ENCODE measurements at regions of chr15 and their contacts with region 1.

Region 1: DNA sequence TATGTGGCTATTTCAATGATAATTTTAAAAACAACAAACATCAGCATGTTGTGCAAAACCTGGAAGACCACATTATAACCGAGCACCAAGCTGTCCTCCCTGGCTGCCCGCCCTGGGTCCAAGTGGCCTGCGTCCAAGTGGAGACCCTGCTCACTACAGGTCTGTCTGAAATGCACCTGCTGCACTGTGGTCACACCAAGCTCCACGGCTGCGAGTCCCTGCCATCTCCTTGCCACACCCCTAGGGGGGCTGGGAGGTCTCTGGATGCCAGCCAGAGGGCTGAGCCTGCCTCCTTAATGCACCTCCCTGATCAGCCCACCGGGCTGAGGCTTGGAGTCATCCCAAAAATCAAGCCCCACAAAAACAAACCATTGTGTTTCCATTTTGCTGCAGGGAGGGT is 187.1 kb downstream of the MEGF11 start:
- DNase-seq: no peak
- H3K4me3 ChIP-seq: no peak overlapping the region
- H3K27ac ChIP-seq: no peak overlapping the region
- H3K4me1 ChIP-seq: no peaks in the 10 kb centered on the region
- H3K27me3 ChIP-seq: no peaks in the 10 kb centered on the region
- CTCF ChIP-seq: no peak
- EP300 ChIP-seq: no peak
- POLR2A ChIP-seq: no peak

Region 2: GRCh38 chr15:64651573-64652260 is 1414.7 kb before region 1 on chr15:
- intact Hi-C with region 1: no loop called
- DNase-seq: no peak
- H3K4me3 ChIP-seq: no peak overlapping the region
- H3K27ac ChIP-seq: no peak overlapping the region
- H3K4me1 ChIP-seq: no peaks in the 10 kb centered on the region
- H3K27me3 ChIP-seq: no peaks in the 10 kb centered on the region
- CTCF ChIP-seq: no peak
- EP300 ChIP-seq: no peak
- POLR2A ChIP-seq: no peak

Region 3: DNA sequence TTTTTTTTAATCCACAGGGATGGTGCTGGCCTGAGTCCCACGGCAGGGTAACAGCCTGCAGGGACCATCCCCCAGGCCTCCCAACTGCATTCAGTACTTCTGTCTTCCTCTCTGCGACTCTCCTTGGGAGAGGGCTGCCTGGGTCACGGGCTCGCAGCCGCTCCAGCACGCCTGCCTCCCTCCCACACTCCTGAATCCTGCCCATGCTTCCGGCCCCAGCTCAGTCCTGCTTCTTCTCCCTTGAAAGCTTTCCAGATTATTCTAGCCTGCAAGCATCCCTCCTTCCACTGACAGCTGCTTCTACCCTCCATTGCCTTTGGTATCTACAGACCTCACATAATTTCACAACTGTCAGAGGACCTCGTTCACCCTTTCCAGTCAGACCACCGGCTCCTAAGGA is 154.7 kb after region 1 on chr15:
- intact Hi-C with region 1: no loop called
- DNase-seq: peak in 2 of 5 donors; percentile 30 to 47
- H3K4me3 ChIP-seq: no peak overlapping the region
- H3K27ac ChIP-seq: no peak overlapping the region
- H3K4me1 ChIP-seq: no peaks in the 10 kb centered on the region
- H3K27me3 ChIP-seq: no peaks in the 10 kb centered on the region
- CTCF ChIP-seq: no peak
- EP300 ChIP-seq: no peak
- POLR2A ChIP-seq: no peak

Region 4: DNA sequence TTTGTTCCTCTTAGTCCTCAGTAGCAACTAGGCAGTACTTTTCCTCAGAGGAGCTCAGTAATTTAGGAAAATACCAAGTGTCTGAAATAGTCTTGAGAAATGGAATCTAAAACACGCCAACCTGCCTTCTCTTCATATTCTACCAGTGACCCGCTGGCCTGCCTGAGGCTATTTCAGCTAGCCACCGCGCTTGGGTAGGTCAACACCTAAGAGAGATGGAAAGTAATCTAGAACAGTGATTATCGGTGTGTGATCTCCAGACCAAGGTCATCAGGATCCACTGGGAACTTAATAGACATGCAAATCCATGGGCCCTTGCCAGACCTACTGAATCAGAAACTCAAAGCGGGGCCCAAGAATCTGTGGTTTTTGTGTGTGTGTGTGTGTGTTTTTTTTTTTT is 491.9 kb after region 1 on chr15:
- intact Hi-C with region 1: loop called in 1 of 4 experiments (anchors 5 kb)
- DNase-seq: no peak
- H3K4me3 ChIP-seq: no peak overlapping the region
- H3K27ac ChIP-seq: no peak overlapping the region
- H3K4me1 ChIP-seq: no peaks in the 10 kb centered on the region
- H3K27me3 ChIP-seq: no peaks in the 10 kb centered on the region
- CTCF ChIP-seq: no peak
- EP300 ChIP-seq: no peak
- POLR2A ChIP-seq: no peak

Measured in ovary (tissue), 10 donors.